GM12878 (cell line): ENCODE measurements at regions of chr17 and their contacts with region 1.

Region 1: DNA sequence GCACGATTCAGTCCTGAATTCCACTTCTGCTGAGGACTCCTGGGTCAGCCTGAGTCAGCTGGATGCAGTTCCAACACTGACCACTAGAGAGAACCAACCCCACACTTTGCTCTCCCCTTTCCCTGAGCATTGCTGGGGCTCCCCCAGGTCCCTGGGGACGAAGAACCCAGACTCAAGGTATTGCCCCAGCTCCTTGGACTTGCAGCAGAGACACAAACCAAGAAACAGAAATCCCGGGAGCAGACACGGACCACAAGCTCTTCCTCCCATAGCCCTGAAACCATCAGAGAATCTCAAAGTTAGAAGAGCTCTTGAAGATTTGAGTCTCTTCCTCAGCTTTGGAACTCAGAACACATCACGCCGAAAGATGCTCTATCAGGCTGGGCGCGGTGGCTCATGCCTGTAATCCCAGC is 678 bp upstream of the GH1 start:
- DNase-seq: peak; percentile 71
- ATAC-seq: peak; percentile 83
- H3K4me3 ChIP-seq: no peak overlapping the region
- H3K27ac ChIP-seq: no peak overlapping the region
- H3K4me1 ChIP-seq: peaks cover 16% of the 10 kb centered on the region
- H3K27me3 ChIP-seq: no peaks in the 10 kb centered on the region
- CTCF ChIP-seq: peak; percentile 92 to 97 (median 94)
- EP300 ChIP-seq: no peak
- POLR2A ChIP-seq: no peak
- RAD21 ChIP-seq: peak; percentile 97

Region 2: GRCh38 chr17:63880681-63881080 is 38.6 kb before region 1 on chr17:
- CTCF ChIA-PET with region 1: no interaction called
- POLR2A ChIA-PET with region 1: no interaction called
- RAD21 ChIA-PET with region 1: no interaction called
- SMC1A ChIA-PET with region 1: no interaction called
- in situ Hi-C with region 1: no loop called
- intact Hi-C with region 1: no loop called
- DNase-seq: no peak
- ATAC-seq: no peak
- H3K4me3 ChIP-seq: no peak overlapping the region
- H3K27ac ChIP-seq: no peak overlapping the region
- H3K4me1 ChIP-seq: no peaks in the 10 kb centered on the region
- H3K27me3 ChIP-seq: no peaks in the 10 kb centered on the region
- CTCF ChIP-seq: no peak
- EP300 ChIP-seq: no peak
- POLR2A ChIP-seq: no peak
- RAD21 ChIP-seq: no peak

Region 3: GRCh38 chr17:63904316-63904715 is 15.0 kb before region 1 on chr17:
- CTCF ChIA-PET with region 1: interaction called, 15 read pairs
- POLR2A ChIA-PET with region 1: no interaction called
- RAD21 ChIA-PET with region 1: no interaction called
- SMC1A ChIA-PET with region 1: interaction called, 4 read pairs
- in situ Hi-C with region 1: no loop called
- intact Hi-C with region 1: no loop called
- DNase-seq: no peak
- ATAC-seq: no peak
- H3K4me3 ChIP-seq: no peak overlapping the region
- H3K27ac ChIP-seq: no peak overlapping the region
- H3K4me1 ChIP-seq: no peaks in the 10 kb centered on the region
- H3K27me3 ChIP-seq: no peaks in the 10 kb centered on the region
- CTCF ChIP-seq: no peak
- EP300 ChIP-seq: no peak
- POLR2A ChIP-seq: no peak
- RAD21 ChIP-seq: no peak

Region 4: GRCh38 chr17:63931099-63931561 is 11.8 kb after region 1 on chr17:
- CTCF ChIA-PET with region 1: interaction called, 117 read pairs
- POLR2A ChIA-PET with region 1: interaction called, 20 read pairs
- RAD21 ChIA-PET with region 1: interaction called, 79 read pairs
- SMC1A ChIA-PET with region 1: interaction called, 111 read pairs
- in situ Hi-C with region 1: no loop called
- intact Hi-C with region 1: no loop called
- DNase-seq: no peak
- ATAC-seq: peak; percentile 80
- H3K4me3 ChIP-seq: peak overlapping the region; percentile 98
- H3K27ac ChIP-seq: peak overlapping the region; percentile 89
- H3K4me1 ChIP-seq: peaks cover 46% of the 10 kb centered on the region
- H3K27me3 ChIP-seq: no peaks in the 10 kb centered on the region
- CTCF ChIP-seq: no peak
- EP300 ChIP-seq: no peak
- POLR2A ChIP-seq: no peak
- RAD21 ChIP-seq: no peak

Region 5: GRCh38 chr17:63974594-63975192 is 55.4 kb after region 1 on chr17:
- CTCF ChIA-PET with region 1: interaction called, 18 read pairs
- POLR2A ChIA-PET with region 1: no interaction called
- RAD21 ChIA-PET with region 1: interaction called, 5 read pairs
- SMC1A ChIA-PET with region 1: interaction called, 3 read pairs
- in situ Hi-C with region 1: no loop called
- intact Hi-C with region 1: no loop called
- DNase-seq: no peak
- ATAC-seq: no peak
- H3K4me3 ChIP-seq: no peak overlapping the region
- H3K27ac ChIP-seq: no peak overlapping the region
- H3K4me1 ChIP-seq: no peaks in the 10 kb centered on the region
- H3K27me3 ChIP-seq: peaks cover 0 to 2% of the 10 kb centered on the region in 2 experiments; a peak in 1 of 4 replicates
- CTCF ChIP-seq: no peak
- EP300 ChIP-seq: no peak
- POLR2A ChIP-seq: no peak
- RAD21 ChIP-seq: no peak

Region 6: DNA sequence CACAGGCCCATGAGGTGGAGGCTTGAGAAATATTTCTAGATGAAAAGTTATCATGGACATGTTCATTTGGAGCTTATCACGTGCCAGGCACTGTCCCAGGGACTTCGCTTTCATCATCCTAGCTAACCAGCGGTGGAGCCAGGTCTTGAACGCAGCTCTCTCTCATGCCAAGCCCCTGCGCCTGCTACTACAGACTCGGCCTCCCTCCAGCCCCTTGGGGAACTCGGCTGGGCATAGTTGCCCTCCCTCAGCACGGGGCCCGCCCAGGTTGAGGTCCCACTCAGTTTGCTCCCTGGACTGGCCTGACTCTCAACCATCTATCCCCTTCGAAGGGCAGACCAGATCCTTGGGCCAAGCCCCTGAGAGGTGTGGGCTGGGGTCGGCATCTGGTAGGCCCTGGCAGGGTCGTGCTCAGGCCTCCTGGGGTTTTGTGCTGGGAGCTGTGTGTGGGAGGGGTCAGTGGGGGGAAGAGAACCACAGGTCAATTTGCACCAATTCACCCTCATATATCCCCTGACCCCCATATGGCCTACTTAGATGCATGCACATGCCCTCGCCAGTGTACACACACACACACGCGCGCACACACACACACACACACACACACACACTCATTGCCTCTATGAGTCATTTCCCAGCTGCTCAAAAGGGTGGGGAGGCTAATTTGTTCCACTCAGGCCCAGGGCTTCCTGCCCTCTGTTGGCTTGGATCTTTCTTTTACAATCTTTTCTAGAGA is 65.5 kb after region 1 on chr17:
- CTCF ChIA-PET with region 1: interaction called, 46 read pairs
- POLR2A ChIA-PET with region 1: interaction called, 5 read pairs
- RAD21 ChIA-PET with region 1: interaction called, 24 read pairs
- SMC1A ChIA-PET with region 1: interaction called, 22 read pairs
- in situ Hi-C with region 1: no loop called
- intact Hi-C with region 1: loop called (anchors 1 kb)
- DNase-seq: no peak
- ATAC-seq: peak; percentile 54
- H3K4me3 ChIP-seq: no peak overlapping the region
- H3K27ac ChIP-seq: no peak overlapping the region
- H3K4me1 ChIP-seq: no peaks in the 10 kb centered on the region
- H3K27me3 ChIP-seq: no peaks in the 10 kb centered on the region
- CTCF ChIP-seq: no peak
- EP300 ChIP-seq: no peak
- POLR2A ChIP-seq: no peak
- RAD21 ChIP-seq: no peak

Region 7: GRCh38 chr17:63993368-63993985 is 74.2 kb after region 1 on chr17:
- CTCF ChIA-PET with region 1: interaction called, 46 read pairs
- POLR2A ChIA-PET with region 1: interaction called, 5 read pairs
- RAD21 ChIA-PET with region 1: interaction called, 24 read pairs
- SMC1A ChIA-PET with region 1: interaction called, 22 read pairs
- in situ Hi-C with region 1: no loop called
- intact Hi-C with region 1: loop called (anchors 1 kb)
- DNase-seq: no peak
- ATAC-seq: no peak
- H3K4me3 ChIP-seq: no peak overlapping the region
- H3K27ac ChIP-seq: no peak overlapping the region
- H3K4me1 ChIP-seq: peaks cover 4% of the 10 kb centered on the region
- H3K27me3 ChIP-seq: peaks cover 3 to 7% of the 10 kb centered on the region in 2 experiments
- CTCF ChIP-seq: no peak
- EP300 ChIP-seq: no peak
- POLR2A ChIP-seq: no peak
- RAD21 ChIP-seq: no peak

Region 8: GRCh38 chr17:64091116-64091515 is 171.8 kb after region 1 on chr17:
- CTCF ChIA-PET with region 1: no interaction called
- POLR2A ChIA-PET with region 1: no interaction called
- RAD21 ChIA-PET with region 1: no interaction called
- SMC1A ChIA-PET with region 1: no interaction called
- in situ Hi-C with region 1: no loop called
- intact Hi-C with region 1: no loop called
- DNase-seq: peak; percentile 57
- ATAC-seq: peak; percentile 90
- H3K4me3 ChIP-seq: peak overlapping the region; percentile 9; the same call in 1 of the 2 replicates
- H3K27ac ChIP-seq: peak overlapping the region; percentile 54
- H3K4me1 ChIP-seq: peaks cover 42% of the 10 kb centered on the region
- H3K27me3 ChIP-seq: no peaks in the 10 kb centered on the region
- CTCF ChIP-seq: no peak
- EP300 ChIP-seq: no peak
- POLR2A ChIP-seq: 0 out of 2 replicates have a peak, but pooled peaks have one; percentile 11
- RAD21 ChIP-seq: no peak

Region 9: DNA sequence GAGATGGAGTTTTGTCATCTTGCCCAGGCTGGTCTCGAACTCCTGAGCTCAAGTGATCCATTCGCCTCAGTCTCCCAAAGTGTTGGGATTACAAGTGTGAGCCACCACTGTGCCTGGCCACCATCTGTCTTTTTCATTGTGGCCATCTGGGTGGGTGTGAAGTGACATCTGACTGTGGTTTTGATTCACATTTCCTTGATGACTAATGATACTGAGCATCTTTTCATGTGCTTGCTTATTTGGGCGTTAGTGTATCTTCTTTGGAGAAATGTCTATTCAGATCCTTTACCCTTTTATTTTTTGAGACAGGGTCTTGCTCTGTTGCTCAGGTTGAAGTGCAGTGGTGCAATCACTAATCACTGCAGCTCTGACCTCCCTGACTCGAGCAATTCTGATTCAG is 264.5 kb after region 1 on chr17:
- CTCF ChIA-PET with region 1: no interaction called
- POLR2A ChIA-PET with region 1: no interaction called
- RAD21 ChIA-PET with region 1: no interaction called
- SMC1A ChIA-PET with region 1: no interaction called
- in situ Hi-C with region 1: no loop called
- intact Hi-C with region 1: no loop called
- DNase-seq: no peak
- ATAC-seq: no peak
- H3K4me3 ChIP-seq: no peak overlapping the region
- H3K27ac ChIP-seq: no peak overlapping the region
- H3K4me1 ChIP-seq: no peaks in the 10 kb centered on the region
- H3K27me3 ChIP-seq: no peaks in the 10 kb centered on the region
- CTCF ChIP-seq: no peak
- EP300 ChIP-seq: no peak
- POLR2A ChIP-seq: no peak
- RAD21 ChIP-seq: no peak